BJ (cell line): ENCODE measurements at regions of chr15 and their contacts with region 1.

Region 1: GRCh38 chr15:49855917-49856637 is 235.2 kb downstream of the DTWD1 start:
- DNase-seq: peak; percentile 94
- H3K4me3 ChIP-seq: no peak overlapping the region
- H3K27me3 ChIP-seq: no peaks in the 10 kb centered on the region
- CTCF ChIP-seq: no peak

Region 2: GRCh38 chr15:49832511-49832910 is 23.6 kb before region 1 on chr15:
- CTCF ChIA-PET with region 1: interaction called, 11 read pairs
- POLR2A ChIA-PET with region 1: interaction called, 5 read pairs
- DNase-seq: no peak
- H3K4me3 ChIP-seq: no peak overlapping the region
- H3K27me3 ChIP-seq: no peaks in the 10 kb centered on the region
- CTCF ChIP-seq: peak; percentile 37

Region 3: GRCh38 chr15:49843725-49844124 is 12.4 kb before region 1 on chr15:
- CTCF ChIA-PET with region 1: no interaction called
- POLR2A ChIA-PET with region 1: no interaction called
- DNase-seq: no peak
- H3K4me3 ChIP-seq: no peak overlapping the region
- H3K27me3 ChIP-seq: no peaks in the 10 kb centered on the region
- CTCF ChIP-seq: no peak

Region 4: GRCh38 chr15:49901996-49902684 is 46.1 kb after region 1 on chr15:
- CTCF ChIA-PET with region 1: interaction called, 15 read pairs
- POLR2A ChIA-PET with region 1: interaction called, 4 read pairs
- DNase-seq: no peak
- H3K4me3 ChIP-seq: no peak overlapping the region
- H3K27me3 ChIP-seq: no peaks in the 10 kb centered on the region
- CTCF ChIP-seq: peak; percentile 43

Region 5: DNA sequence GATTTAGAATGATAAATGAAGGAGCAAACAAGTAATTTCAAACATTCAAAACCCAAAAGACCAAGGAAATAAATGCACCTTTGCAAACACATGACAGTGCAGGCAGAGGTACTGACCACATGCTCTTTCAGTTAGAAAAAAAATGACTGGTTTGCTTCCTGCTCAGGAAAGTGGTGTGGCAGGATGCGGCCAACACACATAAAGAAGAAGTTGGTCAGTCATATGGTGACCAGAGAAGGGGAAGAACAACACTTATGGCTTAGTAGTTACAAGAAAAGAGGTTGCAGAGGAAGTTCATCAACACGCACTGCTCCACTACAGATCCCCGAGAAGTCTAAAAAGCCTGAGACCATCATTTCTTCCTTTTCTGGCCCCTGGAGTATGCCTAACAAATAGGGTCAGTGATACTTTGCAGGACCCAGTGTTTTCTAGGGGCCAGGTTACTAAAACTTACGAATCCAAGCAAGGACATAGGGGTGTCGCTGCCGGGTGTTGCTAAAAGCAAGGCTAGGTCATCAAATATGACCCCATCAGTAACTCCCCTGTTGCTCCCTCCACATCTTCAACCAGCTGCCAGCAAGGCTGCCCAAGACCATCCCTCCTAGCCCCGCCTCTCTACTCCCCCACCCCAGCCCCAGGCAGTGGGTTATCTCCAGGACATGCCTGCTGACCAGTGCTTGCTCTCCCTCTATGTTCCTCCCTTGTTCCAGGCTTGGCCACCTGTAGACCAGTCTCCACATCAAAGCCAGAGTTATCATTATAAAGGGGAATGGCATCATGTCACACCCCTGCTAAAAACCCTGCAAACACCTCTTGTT is 251.7 kb after region 1 on chr15:
- CTCF ChIA-PET with region 1: no interaction called
- POLR2A ChIA-PET with region 1: no interaction called
- DNase-seq: no peak
- H3K4me3 ChIP-seq: no peak overlapping the region
- H3K27me3 ChIP-seq: no peaks in the 10 kb centered on the region
- CTCF ChIP-seq: no peak